ENCODE measurements at regions of chr22 and their contacts with region 1.

Region 1: DNA sequence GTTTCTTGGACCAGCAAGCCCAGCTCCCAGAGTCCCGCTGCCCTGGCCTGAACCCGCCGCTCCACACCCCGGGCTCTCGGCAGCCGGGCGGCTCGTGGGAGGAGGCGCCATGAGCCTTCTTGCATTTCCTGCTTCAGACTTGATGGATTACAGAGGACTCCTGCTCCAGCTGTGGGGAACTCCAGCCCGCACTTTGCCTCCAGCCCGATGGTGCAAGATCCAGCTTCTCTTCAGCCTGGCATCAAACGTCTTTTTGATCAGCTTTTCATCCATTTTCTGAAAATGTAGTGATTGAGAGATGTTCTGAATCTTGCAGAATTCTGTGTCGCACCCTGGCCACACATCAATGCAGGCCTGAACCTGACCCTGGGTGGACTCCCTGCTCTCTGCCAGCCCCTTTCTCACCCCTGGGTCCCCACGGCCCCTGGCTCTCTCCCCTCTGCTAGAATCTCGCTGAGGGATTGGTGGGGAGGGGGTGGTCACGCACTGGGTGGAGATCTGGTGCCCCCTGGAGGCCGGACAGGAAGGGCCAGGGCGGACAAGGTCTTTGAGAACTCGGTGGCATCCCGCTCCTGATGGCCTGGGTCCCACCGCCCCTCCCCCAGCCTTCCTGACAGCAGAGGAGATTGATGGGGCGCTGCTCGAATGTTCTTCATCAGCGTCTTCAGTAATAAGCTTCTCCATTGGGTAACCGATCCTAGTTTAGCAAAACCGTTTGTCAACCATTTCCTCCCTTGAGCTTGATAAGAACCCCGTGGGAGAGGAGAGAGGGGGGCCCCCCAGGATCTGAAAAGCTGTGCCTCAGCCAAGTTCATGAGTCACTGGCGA is 12.1 kb upstream of the NFAM1 start:
- DNase-seq: peak; percentile 73
- ATAC-seq: peak; percentile 67
- H3K4me3 ChIP-seq: peak overlapping the region; percentile 46; the same call in 1 of the 2 replicates
- H3K27ac ChIP-seq: peak overlapping the region; percentile 80
- H3K4me1 ChIP-seq: peaks cover 34% of the 10 kb centered on the region
- H3K27me3 ChIP-seq: no peaks in the 10 kb centered on the region
- CTCF ChIP-seq: peak; percentile 69 to 89 (median 75)
- EP300 ChIP-seq: no peak
- POLR2A ChIP-seq: peak; percentile 81
- RAD21 ChIP-seq: peak; percentile 63

Region 2: DNA sequence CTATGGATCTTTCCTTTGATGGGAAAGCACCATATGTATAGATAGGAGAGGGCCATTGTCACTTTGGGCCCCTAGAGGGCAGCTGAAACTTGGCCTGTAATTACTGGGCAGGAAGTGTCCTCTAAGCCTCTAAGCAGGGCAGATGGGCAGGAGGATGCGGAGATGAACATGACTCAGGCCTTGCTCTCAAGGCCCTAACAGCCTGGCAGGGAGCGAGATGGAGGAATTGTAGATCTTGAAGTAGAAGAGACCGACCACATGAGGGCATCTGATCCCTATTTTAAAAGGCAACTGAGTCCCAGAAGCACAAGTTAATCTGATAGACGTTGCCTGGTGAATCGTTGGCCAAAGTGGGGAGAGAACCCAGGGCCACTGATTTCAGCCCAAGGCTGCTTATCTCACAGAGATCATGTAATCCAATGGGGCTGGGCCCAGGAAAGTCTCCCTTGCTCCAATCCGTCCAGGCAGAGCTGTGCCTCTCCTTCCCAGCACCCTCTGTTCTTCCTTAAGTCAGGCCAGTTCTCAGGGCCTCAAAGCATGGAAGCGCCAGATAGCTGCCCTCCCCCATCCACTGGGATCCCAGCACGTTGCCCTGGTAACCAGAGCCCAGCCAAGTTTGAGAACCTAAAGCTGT is 477.6 kb before region 1 on chr22:
- CTCF ChIA-PET with region 1: interaction called, 10 read pairs
- POLR2A ChIA-PET with region 1: no interaction called
- RAD21 ChIA-PET with region 1: interaction called, 3 read pairs
- SMC1A ChIA-PET with region 1: interaction called, 3 read pairs
- in situ Hi-C with region 1: loop called (anchors 5 kb)
- intact Hi-C with region 1: no loop called
- DNase-seq: peak; percentile 54
- ATAC-seq: peak; percentile 89
- H3K4me3 ChIP-seq: no peak overlapping the region
- H3K27ac ChIP-seq: no peak overlapping the region
- H3K4me1 ChIP-seq: no peaks in the 10 kb centered on the region
- H3K27me3 ChIP-seq: no peaks in the 10 kb centered on the region
- CTCF ChIP-seq: peak; percentile 39 to 69 (median 67); a peak in 5 of 6 replicates
- EP300 ChIP-seq: no peak
- POLR2A ChIP-seq: no peak
- RAD21 ChIP-seq: peak; percentile 76

Region 3: DNA sequence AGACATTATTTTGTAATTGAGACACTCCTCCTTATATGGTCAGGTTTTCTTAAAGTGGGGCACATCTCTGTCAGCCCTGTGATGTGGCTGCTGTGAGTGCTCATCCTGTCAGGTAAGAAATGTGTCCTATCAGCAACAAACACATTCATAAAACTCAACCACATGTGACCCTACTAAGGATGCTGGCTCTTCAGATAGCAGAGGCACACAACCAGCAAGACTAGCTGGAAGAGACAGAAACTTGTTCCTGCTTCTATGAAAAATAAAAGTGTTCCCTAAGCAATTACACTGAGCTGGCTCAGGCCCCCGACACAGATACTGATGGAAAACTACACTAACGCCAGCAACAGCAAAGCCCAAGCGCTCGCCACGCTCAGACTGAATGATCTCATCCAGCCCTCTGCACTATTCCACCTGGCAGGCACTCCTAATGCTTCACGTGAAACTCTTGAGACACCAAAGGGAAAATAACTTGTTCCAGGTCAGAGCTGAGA is 263.9 kb before region 1 on chr22:
- CTCF ChIA-PET with region 1: interaction called, 133 read pairs
- POLR2A ChIA-PET with region 1: interaction called, 18 read pairs
- RAD21 ChIA-PET with region 1: interaction called, 53 read pairs
- SMC1A ChIA-PET with region 1: interaction called, 132 read pairs
- in situ Hi-C with region 1: no loop called
- intact Hi-C with region 1: no loop called
- DNase-seq: no peak
- ATAC-seq: peak; percentile 27
- H3K4me3 ChIP-seq: no peak overlapping the region
- H3K27ac ChIP-seq: peak overlapping the region; percentile 66
- H3K4me1 ChIP-seq: peaks cover 23% of the 10 kb centered on the region
- H3K27me3 ChIP-seq: no peaks in the 10 kb centered on the region
- CTCF ChIP-seq: no peak
- EP300 ChIP-seq: no peak
- POLR2A ChIP-seq: no peak
- RAD21 ChIP-seq: no peak

Region 4: DNA sequence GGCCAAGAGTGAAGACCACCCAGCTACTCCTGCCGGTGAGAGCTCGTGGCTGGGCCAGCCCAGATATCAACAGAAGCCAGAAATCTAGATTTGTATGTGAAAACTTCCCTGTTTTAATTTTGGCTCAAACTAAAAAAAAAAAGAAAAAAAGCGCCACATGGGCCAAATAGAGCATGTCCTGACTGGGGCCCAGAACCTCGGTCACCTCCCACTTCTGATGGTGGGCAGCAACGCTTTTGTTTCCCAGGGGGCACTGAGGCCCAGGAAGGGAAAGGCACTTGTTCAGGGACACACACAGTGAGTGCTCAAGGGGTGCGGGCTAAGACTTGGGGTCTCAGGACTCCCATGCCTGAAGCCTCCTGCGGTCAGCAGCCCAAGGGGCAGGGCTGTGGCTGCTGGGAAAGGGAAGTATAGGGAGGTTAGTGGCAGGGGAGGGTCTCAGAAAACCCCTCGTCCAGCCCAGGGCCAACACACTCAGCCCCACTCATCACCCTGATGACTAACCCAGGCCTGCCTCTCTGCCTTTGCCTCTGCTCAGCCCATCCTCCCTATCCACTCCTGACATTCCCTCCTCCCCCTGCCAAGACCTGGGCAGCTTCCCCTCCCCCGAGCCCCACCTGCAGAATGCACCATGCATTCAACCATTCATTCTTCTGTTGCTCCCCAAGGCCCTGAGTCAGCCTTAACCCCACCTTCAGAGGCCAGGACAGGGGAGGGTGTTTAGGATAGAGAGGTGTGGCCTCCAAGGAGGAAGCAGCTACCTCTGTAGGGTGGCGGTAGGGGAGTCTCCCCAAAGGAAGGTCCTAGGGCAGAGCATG is 143.8 kb before region 1 on chr22:
- CTCF ChIA-PET with region 1: no interaction called
- POLR2A ChIA-PET with region 1: no interaction called
- RAD21 ChIA-PET with region 1: no interaction called
- SMC1A ChIA-PET with region 1: no interaction called
- in situ Hi-C with region 1: no loop called
- intact Hi-C with region 1: no loop called
- DNase-seq: no peak
- ATAC-seq: peak; percentile 94
- H3K4me3 ChIP-seq: peak overlapping the region; percentile 55
- H3K27ac ChIP-seq: peak overlapping the region; percentile 73
- H3K4me1 ChIP-seq: peaks cover 22% of the 10 kb centered on the region
- H3K27me3 ChIP-seq: no peaks in the 10 kb centered on the region
- CTCF ChIP-seq: no peak
- EP300 ChIP-seq: no peak
- POLR2A ChIP-seq: no peak
- RAD21 ChIP-seq: no peak

Region 5: GRCh38 chr22:42376711-42377554 is 67.4 kb before region 1 on chr22:
- CTCF ChIA-PET with region 1: no interaction called
- POLR2A ChIA-PET with region 1: no interaction called
- RAD21 ChIA-PET with region 1: no interaction called
- SMC1A ChIA-PET with region 1: no interaction called
- in situ Hi-C with region 1: no loop called
- intact Hi-C with region 1: no loop called
- DNase-seq: no peak
- ATAC-seq: no peak
- H3K4me3 ChIP-seq: no peak overlapping the region
- H3K27ac ChIP-seq: no peak overlapping the region
- H3K4me1 ChIP-seq: no peaks in the 10 kb centered on the region
- H3K27me3 ChIP-seq: no peaks in the 10 kb centered on the region
- CTCF ChIP-seq: no peak
- EP300 ChIP-seq: no peak
- POLR2A ChIP-seq: no peak
- RAD21 ChIP-seq: no peak

Region 6: GRCh38 chr22:42396621-42397331 is 47.5 kb before region 1 on chr22:
- CTCF ChIA-PET with region 1: interaction called, 11 read pairs
- POLR2A ChIA-PET with region 1: interaction called, 7 read pairs
- RAD21 ChIA-PET with region 1: interaction called, 6 read pairs
- SMC1A ChIA-PET with region 1: interaction called, 3 read pairs
- in situ Hi-C with region 1: no loop called
- intact Hi-C with region 1: no loop called
- DNase-seq: no peak
- ATAC-seq: peak; percentile 77
- H3K4me3 ChIP-seq: peak overlapping the region; percentile 41; the same call in 1 of the 2 replicates
- H3K27ac ChIP-seq: peak overlapping the region; percentile 15; the same call in 1 of the 2 replicates
- H3K4me1 ChIP-seq: peaks cover 16% of the 10 kb centered on the region
- H3K27me3 ChIP-seq: no peaks in the 10 kb centered on the region; a peak in 1 of 4 replicates
- CTCF ChIP-seq: peak; percentile 11 to 23 (median 18); a peak in 4 of 6 replicates
- EP300 ChIP-seq: no peak
- POLR2A ChIP-seq: no peak
- RAD21 ChIP-seq: no peak

Region 7: DNA sequence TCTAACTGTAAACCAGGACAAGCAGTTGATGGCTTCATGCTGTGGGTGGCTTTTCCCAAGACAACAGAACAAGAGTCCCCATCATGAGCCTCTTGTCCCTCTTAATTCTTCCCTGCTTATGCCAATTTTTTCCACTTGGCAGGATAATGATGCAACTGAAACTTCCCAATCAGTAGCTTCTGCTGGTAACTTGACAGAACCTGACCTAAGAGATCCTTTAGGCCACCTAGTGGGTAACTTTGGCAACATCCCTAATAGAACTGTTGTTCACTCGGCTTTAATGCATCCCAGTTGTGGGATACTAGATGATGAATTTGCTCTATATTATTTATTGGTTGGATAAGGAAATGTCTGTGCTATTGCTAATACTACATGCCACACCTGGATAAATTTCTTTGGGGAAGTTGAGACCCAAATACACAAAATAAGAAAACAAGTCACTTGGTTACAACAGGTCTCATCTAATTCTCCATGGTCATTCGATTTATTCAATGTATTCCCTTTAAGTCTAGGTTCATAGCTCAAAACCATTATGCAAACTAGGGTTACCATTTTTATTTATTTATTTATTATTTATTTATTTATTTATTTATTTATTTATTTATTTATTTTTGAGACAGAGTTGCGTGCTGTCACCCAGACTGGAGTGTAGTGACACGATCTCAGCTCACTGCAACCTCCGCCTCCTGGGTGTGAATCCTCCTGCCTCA is 29.3 kb after region 1 on chr22:
- CTCF ChIA-PET with region 1: interaction called, 40 read pairs
- POLR2A ChIA-PET with region 1: interaction called, 3 read pairs
- RAD21 ChIA-PET with region 1: interaction called, 20 read pairs
- SMC1A ChIA-PET with region 1: interaction called, 23 read pairs
- in situ Hi-C with region 1: no loop called
- intact Hi-C with region 1: no loop called
- DNase-seq: no peak
- ATAC-seq: peak; percentile 89
- H3K4me3 ChIP-seq: no peak overlapping the region
- H3K27ac ChIP-seq: no peak overlapping the region
- H3K4me1 ChIP-seq: no peaks in the 10 kb centered on the region
- H3K27me3 ChIP-seq: 0 out of 4 replicates have a peak, but pooled peaks cover 1 to 3% of the 10 kb centered on the region in 2 experiments
- CTCF ChIP-seq: peak; percentile 67 to 73 (median 70)
- EP300 ChIP-seq: no peak
- POLR2A ChIP-seq: no peak
- RAD21 ChIP-seq: peak; percentile 68

Region 8: GRCh38 chr22:42596336-42596735 is 152.0 kb after region 1 on chr22:
- CTCF ChIA-PET with region 1: no interaction called
- POLR2A ChIA-PET with region 1: no interaction called
- RAD21 ChIA-PET with region 1: no interaction called
- SMC1A ChIA-PET with region 1: no interaction called
- in situ Hi-C with region 1: no loop called
- intact Hi-C with region 1: no loop called
- DNase-seq: no peak
- ATAC-seq: no peak
- H3K4me3 ChIP-seq: no peak overlapping the region
- H3K27ac ChIP-seq: no peak overlapping the region
- H3K4me1 ChIP-seq: no peaks in the 10 kb centered on the region
- H3K27me3 ChIP-seq: no peaks in the 10 kb centered on the region
- CTCF ChIP-seq: no peak
- EP300 ChIP-seq: no peak
- POLR2A ChIP-seq: no peak
- RAD21 ChIP-seq: no peak

Measured in GM12878 (cell line).